ENCODE measurements at regions of chr10 and their contacts with region 1.

Region 1: DNA sequence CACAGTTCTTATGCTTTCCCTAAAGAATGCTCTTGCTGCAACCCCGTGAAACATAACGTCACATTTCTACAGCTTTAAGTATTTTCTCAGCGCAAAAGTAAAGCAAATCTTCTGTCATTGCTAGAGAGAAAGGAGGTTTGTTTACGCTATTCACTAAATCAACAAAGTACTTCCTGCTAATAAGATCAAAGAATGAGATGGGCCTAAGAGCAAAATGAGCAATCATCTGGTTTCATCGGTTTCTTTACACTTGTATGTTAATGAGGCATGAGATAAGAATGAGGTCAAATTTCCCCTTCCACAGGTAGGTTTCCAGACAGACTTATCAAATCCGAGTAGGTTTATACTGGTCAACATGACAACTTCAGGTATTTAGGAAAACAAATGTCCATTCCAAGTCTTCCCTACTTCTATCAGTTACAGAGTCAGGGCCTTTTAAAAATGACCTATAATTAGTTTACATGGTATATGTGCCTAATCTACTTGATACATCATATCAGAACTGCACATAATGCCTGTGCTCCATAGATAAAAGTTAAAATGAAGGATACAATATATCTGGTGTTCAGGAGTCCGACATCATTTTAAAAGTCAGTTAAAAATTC is 8.4 kb downstream of the USP6NL start:
- DNase-seq: peak; percentile 49
- ATAC-seq: no peak
- H3K4me3 ChIP-seq: peak overlapping the region in 1 of 5 experiments; percentile 17
- H3K4me3 Mint-ChIP-seq: peak overlapping the region; percentile 63
- H3K27ac ChIP-seq: peak overlapping the region; percentile 49 to 87
- H3K27ac Mint-ChIP-seq: peak overlapping the region; percentile 73
- H3K4me1 ChIP-seq: peaks cover 66 to 88% of the 10 kb centered on the region in 2 donors
- H3K4me1 Mint-ChIP-seq: peaks cover 78% of the 10 kb centered on the region
- H3K27me3 ChIP-seq: no peaks in the 10 kb centered on the region
- H3K27me3 Mint-ChIP-seq: no peaks in the 10 kb centered on the region
- CTCF ChIP-seq: no peak

Region 2: DNA sequence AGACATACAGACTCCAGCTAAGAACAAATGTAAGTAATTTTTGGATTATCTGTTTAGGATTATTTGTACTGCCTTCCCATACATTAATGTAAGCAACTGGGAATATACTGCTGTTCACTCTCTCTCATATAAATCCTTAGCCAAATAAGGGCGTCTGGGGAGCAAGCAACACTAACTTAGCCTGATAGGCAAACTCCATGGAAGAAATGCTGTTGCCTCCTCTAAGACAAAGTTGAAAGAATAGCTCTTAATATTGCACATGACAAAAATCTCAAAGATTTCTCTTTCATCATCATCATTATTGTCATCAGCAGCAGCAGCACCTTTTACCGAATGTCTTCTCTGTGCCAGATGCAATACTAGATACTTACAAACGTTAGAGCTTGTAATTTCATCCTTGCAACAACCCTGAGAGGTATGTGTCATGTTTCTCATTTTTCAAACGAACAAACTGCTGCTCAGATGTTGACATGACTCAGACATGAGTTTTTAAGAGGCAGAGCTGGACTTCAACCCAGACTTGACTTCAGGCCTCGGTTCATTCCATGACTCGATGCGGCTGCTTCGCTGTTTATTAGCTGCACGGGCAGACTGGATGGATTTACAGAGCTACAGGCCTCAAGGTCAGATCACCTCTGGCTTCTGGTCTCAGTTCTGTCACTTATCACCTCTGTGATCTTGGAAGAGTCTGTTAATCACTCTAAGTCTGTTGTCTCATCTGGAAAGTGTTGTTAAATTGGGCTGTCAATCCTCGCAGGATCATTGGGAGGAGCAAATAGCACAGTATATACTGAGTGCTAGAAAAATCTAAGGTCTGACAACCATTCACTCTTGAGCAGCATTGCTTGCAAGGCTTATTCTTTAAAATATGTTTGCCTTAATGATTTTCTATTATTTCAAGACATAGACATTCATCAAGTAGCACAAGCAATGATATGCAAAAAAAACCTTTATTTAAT is 711.6 kb before region 1 on chr10:
- CTCF ChIA-PET with region 1: no interaction called
- POLR2A ChIA-PET with region 1: no interaction called
- intact Hi-C with region 1: no loop called
- DNase-seq: no peak
- ATAC-seq: no peak
- H3K4me3 ChIP-seq: no peak overlapping the region
- H3K4me3 Mint-ChIP-seq: no peak overlapping the region
- H3K27ac ChIP-seq: no peak overlapping the region
- H3K27ac Mint-ChIP-seq: no peak overlapping the region
- H3K4me1 ChIP-seq: no peaks in the 10 kb centered on the region
- H3K4me1 Mint-ChIP-seq: no peaks in the 10 kb centered on the region
- H3K27me3 ChIP-seq: no peaks in the 10 kb centered on the region
- H3K27me3 Mint-ChIP-seq: peaks cover 24% of the 10 kb centered on the region
- CTCF ChIP-seq: no peak

Region 3: DNA sequence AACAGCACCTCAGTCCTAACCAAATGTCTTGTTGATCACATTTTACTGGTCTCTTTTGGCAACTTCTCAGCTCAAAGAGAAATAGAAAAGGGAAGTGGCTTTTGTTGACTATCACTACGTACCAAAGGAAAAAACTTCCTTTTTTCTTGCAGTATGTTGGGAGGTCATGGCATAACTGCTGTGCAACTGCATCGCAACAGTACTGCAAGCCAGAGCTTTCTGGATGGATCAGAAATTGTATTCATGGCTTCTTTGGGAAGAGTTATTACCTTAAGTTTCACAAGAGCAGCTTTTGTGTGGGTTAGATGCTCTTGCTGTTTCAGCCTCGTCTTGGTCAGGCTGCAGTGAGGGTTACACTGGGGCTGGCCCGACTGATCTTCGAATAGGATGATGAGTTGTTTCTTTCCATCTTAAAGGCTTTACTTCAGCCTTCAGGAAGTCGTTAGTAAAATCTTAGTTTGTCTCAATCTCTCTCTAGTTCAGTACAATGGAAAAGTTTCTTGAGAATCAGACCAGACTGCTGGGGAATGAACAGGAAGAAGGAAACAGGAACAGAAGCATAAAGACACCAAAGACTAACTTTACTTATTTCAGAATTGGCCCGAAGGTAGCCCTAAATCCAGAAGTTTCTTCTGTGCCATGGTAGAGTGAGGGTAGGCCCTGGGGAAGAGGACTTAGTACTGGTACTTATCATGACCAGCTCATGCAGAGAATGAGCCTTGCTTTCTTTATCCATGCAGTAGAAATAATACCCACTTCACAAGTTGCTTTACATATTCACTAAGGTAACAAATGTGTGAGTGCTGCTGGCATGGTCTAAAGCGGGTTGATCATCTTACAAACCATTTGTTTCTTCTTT is 431.8 kb before region 1 on chr10:
- CTCF ChIA-PET with region 1: no interaction called
- POLR2A ChIA-PET with region 1: no interaction called
- intact Hi-C with region 1: loop called (anchors 5 kb)
- DNase-seq: peak; percentile 75
- ATAC-seq: peak; percentile 53
- H3K4me3 ChIP-seq: peak overlapping the region; percentile 31 to 99 (median 62)
- H3K4me3 Mint-ChIP-seq: no peak overlapping the region
- H3K27ac ChIP-seq: peak overlapping the region; percentile 83 to 87
- H3K27ac Mint-ChIP-seq: no peak overlapping the region
- H3K4me1 ChIP-seq: peaks cover 84 to 90% of the 10 kb centered on the region in 2 donors
- H3K4me1 Mint-ChIP-seq: peaks cover 45% of the 10 kb centered on the region
- H3K27me3 ChIP-seq: no peaks in the 10 kb centered on the region
- H3K27me3 Mint-ChIP-seq: no peaks in the 10 kb centered on the region
- CTCF ChIP-seq: no peak

Region 4: GRCh38 chr10:11539191-11539868 is 63.7 kb before region 1 on chr10:
- CTCF ChIA-PET with region 1: interaction called, 9 read pairs
- POLR2A ChIA-PET with region 1: interaction called, 3 read pairs
- intact Hi-C with region 1: loop called (anchors 5 kb)
- DNase-seq: no peak
- ATAC-seq: peak; percentile 20
- H3K4me3 ChIP-seq: no peak overlapping the region
- H3K4me3 Mint-ChIP-seq: peak overlapping the region; percentile 40
- H3K27ac ChIP-seq: peak overlapping the region in 1 of 2 donors; percentile 35
- H3K27ac Mint-ChIP-seq: peak overlapping the region; percentile 78
- H3K4me1 ChIP-seq: peaks cover 41 to 44% of the 10 kb centered on the region in 2 donors
- H3K4me1 Mint-ChIP-seq: peaks cover 78% of the 10 kb centered on the region
- H3K27me3 ChIP-seq: no peaks in the 10 kb centered on the region
- H3K27me3 Mint-ChIP-seq: no peaks in the 10 kb centered on the region
- CTCF ChIP-seq: no peak

Region 5: DNA sequence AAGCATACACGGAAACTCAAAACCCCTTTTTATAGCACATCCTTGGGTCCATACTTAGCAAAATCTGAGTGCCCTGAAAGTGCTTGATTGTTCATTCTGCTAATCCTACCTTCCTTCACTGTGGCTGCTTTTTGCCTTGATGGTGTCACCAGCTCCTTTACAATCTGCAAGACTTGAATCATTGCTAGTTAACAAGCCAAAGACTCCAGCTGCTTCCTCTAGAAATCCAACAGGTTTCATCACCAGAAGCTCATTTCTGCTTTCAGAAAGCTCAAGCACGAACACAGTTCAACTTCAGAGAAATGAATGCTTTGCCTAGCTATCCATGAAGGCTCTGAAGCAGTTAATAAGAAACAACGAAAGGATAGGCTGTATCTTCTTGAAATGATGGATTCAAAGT is 29.5 kb before region 1 on chr10:
- CTCF ChIA-PET with region 1: interaction called, 7 read pairs
- POLR2A ChIA-PET with region 1: interaction called, 3 read pairs
- intact Hi-C with region 1: loop called (anchors 5 kb)
- DNase-seq: peak; percentile 55
- ATAC-seq: peak; percentile 43
- H3K4me3 ChIP-seq: peak overlapping the region in 2 of 5 experiments; percentile 5 to 20
- H3K4me3 Mint-ChIP-seq: peak overlapping the region; percentile 76
- H3K27ac ChIP-seq: peak overlapping the region; percentile 26 to 68
- H3K27ac Mint-ChIP-seq: peak overlapping the region; percentile 86
- H3K4me1 ChIP-seq: peaks cover 60 to 65% of the 10 kb centered on the region in 2 donors
- H3K4me1 Mint-ChIP-seq: peaks cover 73% of the 10 kb centered on the region
- H3K27me3 ChIP-seq: no peaks in the 10 kb centered on the region
- H3K27me3 Mint-ChIP-seq: no peaks in the 10 kb centered on the region
- CTCF ChIP-seq: no peak

Region 6: GRCh38 chr10:11587722-11588272 is 15.2 kb before region 1 on chr10:
- CTCF ChIA-PET with region 1: no interaction called
- POLR2A ChIA-PET with region 1: no interaction called
- intact Hi-C with region 1: loop called (anchors 2 kb)
- DNase-seq: no peak
- ATAC-seq: no peak
- H3K4me3 ChIP-seq: no peak overlapping the region
- H3K4me3 Mint-ChIP-seq: no peak overlapping the region
- H3K27ac ChIP-seq: peak overlapping the region in 1 of 2 donors; percentile 40
- H3K27ac Mint-ChIP-seq: peak overlapping the region; percentile 16
- H3K4me1 ChIP-seq: peaks cover 21 to 42% of the 10 kb centered on the region in 2 donors
- H3K4me1 Mint-ChIP-seq: peaks cover 55% of the 10 kb centered on the region
- H3K27me3 ChIP-seq: no peaks in the 10 kb centered on the region
- H3K27me3 Mint-ChIP-seq: no peaks in the 10 kb centered on the region
- CTCF ChIP-seq: no peak

Region 7: DNA sequence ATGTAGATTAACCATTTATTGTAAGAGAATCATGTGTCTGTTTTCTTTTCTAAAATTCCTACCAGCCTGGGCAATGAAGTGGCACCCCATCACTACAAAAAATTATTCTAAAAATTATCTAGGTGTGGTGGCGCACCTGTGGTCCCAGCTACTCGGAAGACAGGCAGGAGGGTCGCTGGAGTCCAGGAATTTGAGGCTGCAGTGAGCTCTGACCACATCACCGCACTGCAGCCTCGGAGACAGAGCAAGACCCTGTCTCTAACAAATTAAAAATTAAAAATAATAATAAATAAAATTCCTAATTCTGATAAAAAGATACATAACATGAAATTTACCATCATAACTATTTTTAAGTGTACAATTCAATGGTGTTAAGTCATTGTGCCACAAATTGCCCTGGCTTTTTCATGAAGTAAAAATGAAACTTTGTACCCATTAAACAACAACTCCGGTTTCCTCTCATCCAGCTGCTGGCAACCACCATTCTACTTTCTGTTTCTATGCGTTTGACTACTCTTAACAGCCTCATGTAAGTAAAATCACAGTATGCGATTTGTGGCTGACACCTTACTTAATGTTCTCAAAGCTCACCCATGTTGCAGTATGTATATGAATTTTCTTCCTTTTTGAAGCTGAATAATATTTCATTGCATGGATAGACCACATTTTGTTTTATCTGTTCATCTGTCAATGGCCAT is 29.0 kb after region 1 on chr10:
- CTCF ChIA-PET with region 1: no interaction called
- POLR2A ChIA-PET with region 1: interaction called, 11 read pairs
- intact Hi-C with region 1: loop called (anchors 5 kb)
- DNase-seq: peak; percentile 82
- ATAC-seq: peak; percentile 96
- H3K4me3 ChIP-seq: peak overlapping the region in 3 of 5 experiments; percentile 13 to 43 (median 16)
- H3K4me3 Mint-ChIP-seq: peak overlapping the region; percentile 71
- H3K27ac ChIP-seq: peak overlapping the region; percentile 71 to 77
- H3K27ac Mint-ChIP-seq: peak overlapping the region; percentile 94
- H3K4me1 ChIP-seq: peaks cover 29 to 36% of the 10 kb centered on the region in 2 donors
- H3K4me1 Mint-ChIP-seq: peaks cover 58% of the 10 kb centered on the region
- H3K27me3 ChIP-seq: no peaks in the 10 kb centered on the region
- H3K27me3 Mint-ChIP-seq: no peaks in the 10 kb centered on the region
- CTCF ChIP-seq: no peak

Region 8: DNA sequence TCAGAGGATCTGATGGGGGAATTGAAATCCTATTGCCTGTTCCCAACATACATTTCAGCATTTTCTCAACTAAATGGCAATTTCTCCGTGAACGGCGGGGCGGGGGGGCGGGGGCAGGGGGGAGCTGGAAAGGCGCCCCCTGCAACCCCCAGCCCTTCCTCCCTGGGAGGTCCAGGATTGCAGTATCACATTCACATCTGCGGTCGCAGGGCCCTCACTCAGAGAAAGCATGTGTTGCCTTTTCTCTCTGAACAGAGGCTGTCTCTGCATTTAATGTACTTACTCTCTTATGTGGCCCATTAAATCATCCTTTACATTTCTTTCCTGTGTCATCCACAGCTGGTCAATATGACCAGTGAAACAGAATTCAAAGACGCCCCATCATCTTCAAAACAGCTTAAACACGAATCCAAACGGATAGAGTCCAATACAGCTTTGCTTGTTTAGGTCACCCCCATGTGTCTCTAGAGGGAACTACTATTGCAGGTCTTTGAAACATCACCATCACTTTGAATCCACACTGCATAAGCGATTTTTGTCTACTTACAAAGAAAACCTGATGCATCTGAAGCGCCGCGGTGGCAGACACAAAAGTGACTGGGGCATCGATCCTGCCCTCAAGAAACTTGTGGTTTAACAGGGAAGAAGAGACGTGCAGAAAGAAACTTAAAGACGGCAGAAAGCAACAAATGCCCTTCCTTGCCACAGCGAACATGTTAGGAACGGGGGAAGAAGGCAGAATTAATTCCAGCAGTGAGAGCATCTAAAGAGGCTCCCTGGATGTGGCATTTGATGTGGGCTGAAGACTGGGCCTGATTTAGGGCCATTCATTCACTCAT is 122.1 kb after region 1 on chr10:
- CTCF ChIA-PET with region 1: interaction called, 27 read pairs
- POLR2A ChIA-PET with region 1: no interaction called
- intact Hi-C with region 1: loop called (anchors 5 kb)
- DNase-seq: peak; percentile 79
- ATAC-seq: peak; percentile 87
- H3K4me3 ChIP-seq: no peak overlapping the region
- H3K4me3 Mint-ChIP-seq: peak overlapping the region; percentile 27
- H3K27ac ChIP-seq: no peak overlapping the region
- H3K27ac Mint-ChIP-seq: peak overlapping the region; percentile 72
- H3K4me1 ChIP-seq: peaks cover 19 to 24% of the 10 kb centered on the region in 2 donors
- H3K4me1 Mint-ChIP-seq: peaks cover 27% of the 10 kb centered on the region
- H3K27me3 ChIP-seq: no peaks in the 10 kb centered on the region
- H3K27me3 Mint-ChIP-seq: no peaks in the 10 kb centered on the region
- CTCF ChIP-seq: peak; percentile 86

Region 9: DNA sequence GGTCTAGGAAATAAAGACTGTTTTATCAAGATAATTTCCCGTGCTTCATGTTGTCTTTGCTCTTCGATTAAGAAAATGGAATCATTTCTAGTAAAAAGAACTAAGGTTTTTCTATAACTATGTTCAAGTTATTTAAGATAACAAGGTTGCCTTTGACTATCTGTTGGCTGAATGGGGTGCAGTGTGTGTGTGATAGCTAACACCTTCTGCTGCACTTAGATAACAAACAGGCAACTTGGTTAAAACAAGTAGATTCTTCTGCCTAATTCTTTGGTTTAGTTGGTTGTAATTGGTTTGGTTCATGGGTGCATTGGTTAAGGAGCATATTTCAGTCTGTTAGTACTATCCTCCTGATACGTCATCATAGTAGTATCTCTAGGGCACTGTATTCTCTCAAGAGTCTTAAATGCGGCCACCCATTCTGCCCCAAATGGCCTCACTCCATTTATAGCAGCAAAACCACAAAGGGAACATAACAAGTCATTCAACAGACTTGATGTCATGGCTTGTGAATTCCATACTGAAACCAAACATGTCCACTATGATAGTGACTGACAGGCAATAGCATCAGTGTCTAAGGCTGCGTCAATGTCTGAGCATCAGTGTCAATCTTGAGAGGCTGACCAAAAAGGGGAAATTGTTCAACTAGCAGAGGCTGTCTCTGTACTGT is 1342.8 kb after region 1 on chr10:
- CTCF ChIA-PET with region 1: no interaction called
- POLR2A ChIA-PET with region 1: no interaction called
- intact Hi-C with region 1: no loop called
- DNase-seq: no peak
- ATAC-seq: no peak
- H3K4me3 ChIP-seq: no peak overlapping the region
- H3K4me3 Mint-ChIP-seq: no peak overlapping the region
- H3K27ac ChIP-seq: no peak overlapping the region
- H3K27ac Mint-ChIP-seq: no peak overlapping the region
- H3K4me1 ChIP-seq: no peaks in the 10 kb centered on the region
- H3K4me1 Mint-ChIP-seq: no peaks in the 10 kb centered on the region
- H3K27me3 ChIP-seq: no peaks in the 10 kb centered on the region
- H3K27me3 Mint-ChIP-seq: no peaks in the 10 kb centered on the region
- CTCF ChIP-seq: no peak